ENCODE measurements at regions of chr5 and their contacts with region 1.

Region 1: DNA sequence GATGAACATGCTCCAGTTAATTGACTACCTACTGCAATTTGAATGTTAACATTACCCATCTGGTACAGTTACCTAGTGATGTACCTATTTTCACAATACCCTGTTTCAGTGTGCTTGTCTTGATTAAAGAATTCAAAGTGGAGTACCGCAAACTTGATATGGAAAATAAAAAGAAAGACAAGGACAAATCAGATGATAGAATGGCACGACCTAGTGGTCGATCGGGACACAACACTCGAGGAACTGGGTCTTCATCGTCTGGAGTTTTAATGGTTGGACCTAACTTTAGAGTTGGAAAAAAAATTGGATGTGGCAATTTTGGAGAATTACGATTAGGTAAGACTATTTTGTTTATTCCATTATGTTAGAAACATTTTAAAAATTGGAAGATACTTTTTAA is 33.5 kb downstream of the CSNK1G3 start:
- DNase-seq: peak in 7 of 9 donors; percentile 2 to 27 (median 9)
- ATAC-seq: no peak
- H3K4me3 ChIP-seq: no peak overlapping the region
- H3K4me3 Mint-ChIP-seq: no peak overlapping the region
- H3K27ac ChIP-seq: no peak overlapping the region
- H3K27ac Mint-ChIP-seq: no peak overlapping the region
- H3K4me1 ChIP-seq: peaks cover 9 to 19% of the 10 kb centered on the region in 2 donors
- H3K4me1 Mint-ChIP-seq: peaks cover 35 to 79% (median 56%) of the 10 kb centered on the region in 7 donors
- H3K27me3 ChIP-seq: no peaks in the 10 kb centered on the region
- H3K27me3 Mint-ChIP-seq: no peaks in the 10 kb centered on the region

Region 2: GRCh38 chr5:123448017-123448617 is 97.4 kb before region 1 on chr5:
- CTCF ChIA-PET with region 1: no interaction called
- POLR2A ChIA-PET with region 1: no interaction called
- intact Hi-C with region 1: loop called in 1 of 2 experiments (anchors 2 kb)
- DNase-seq: no peak
- ATAC-seq: no peak
- H3K4me3 ChIP-seq: no peak overlapping the region
- H3K4me3 Mint-ChIP-seq: peak overlapping the region in 1 of 10 donors; percentile 61
- H3K27ac ChIP-seq: no peak overlapping the region
- H3K27ac Mint-ChIP-seq: peak overlapping the region in 3 of 9 donors; percentile 10 to 69 (median 55)
- H3K4me1 ChIP-seq: no peaks in the 10 kb centered on the region
- H3K4me1 Mint-ChIP-seq: peaks cover 0 to 33% (median 6%) of the 10 kb centered on the region in 7 donors
- H3K27me3 ChIP-seq: no peaks in the 10 kb centered on the region
- H3K27me3 Mint-ChIP-seq: peaks cover 0 to 10% (median 0%) of the 10 kb centered on the region in 5 donors

Region 3: DNA sequence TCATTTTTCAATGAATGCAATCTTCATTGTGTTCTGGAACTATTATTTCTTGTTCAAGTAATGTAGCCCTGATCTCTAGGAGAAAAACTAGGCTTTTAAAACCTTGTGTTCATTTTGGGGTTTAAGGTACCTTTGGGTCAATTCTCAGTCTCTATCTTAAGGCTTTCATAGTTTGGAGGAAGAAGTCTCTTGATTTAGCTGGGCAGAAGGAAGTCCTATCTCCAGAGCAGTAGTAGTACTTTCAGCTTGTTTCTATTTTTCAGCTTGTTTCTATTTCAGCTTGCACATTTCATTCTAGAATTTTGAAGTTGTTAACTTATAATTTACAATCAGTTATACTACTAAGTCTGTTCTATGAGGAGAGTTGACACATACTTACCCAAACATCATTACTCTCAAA is 18.3 kb before region 1 on chr5:
- CTCF ChIA-PET with region 1: no interaction called
- POLR2A ChIA-PET with region 1: no interaction called
- intact Hi-C with region 1: loop called in 1 of 2 experiments (anchors 2 kb)
- DNase-seq: no peak
- ATAC-seq: no peak
- H3K4me3 ChIP-seq: no peak overlapping the region
- H3K4me3 Mint-ChIP-seq: peak overlapping the region in 3 of 10 donors; percentile 0 to 29 (median 23)
- H3K27ac ChIP-seq: no peak overlapping the region
- H3K27ac Mint-ChIP-seq: peak overlapping the region in 2 of 9 donors; percentile 27 to 46
- H3K4me1 ChIP-seq: no peaks in the 10 kb centered on the region
- H3K4me1 Mint-ChIP-seq: peaks cover 24 to 83% (median 66%) of the 10 kb centered on the region in 7 donors
- H3K27me3 ChIP-seq: no peaks in the 10 kb centered on the region
- H3K27me3 Mint-ChIP-seq: no peaks in the 10 kb centered on the region